B cell (primary cell): ENCODE measurements at regions of chr14 and their contacts with region 1.

Region 1: GRCh38 chr14:91303091-91303923 is 58.8 kb upstream of the GPR68 start:
- DNase-seq: peak; percentile 50
- ATAC-seq: peak; percentile 91
- H3K4me3 ChIP-seq: no peak overlapping the region
- H3K4me3 Mint-ChIP-seq: no peak overlapping the region
- H3K27ac ChIP-seq: peak overlapping the region in 1 of 2 donors; percentile 45
- H3K27ac Mint-ChIP-seq: no peak overlapping the region
- H3K4me1 ChIP-seq: peaks cover 0 to 4% of the 10 kb centered on the region in 2 donors
- H3K4me1 Mint-ChIP-seq: peaks cover 9% of the 10 kb centered on the region
- H3K27me3 ChIP-seq: no peaks in the 10 kb centered on the region
- H3K27me3 Mint-ChIP-seq: no peaks in the 10 kb centered on the region
- CTCF ChIP-seq: no peak

Region 2: DNA sequence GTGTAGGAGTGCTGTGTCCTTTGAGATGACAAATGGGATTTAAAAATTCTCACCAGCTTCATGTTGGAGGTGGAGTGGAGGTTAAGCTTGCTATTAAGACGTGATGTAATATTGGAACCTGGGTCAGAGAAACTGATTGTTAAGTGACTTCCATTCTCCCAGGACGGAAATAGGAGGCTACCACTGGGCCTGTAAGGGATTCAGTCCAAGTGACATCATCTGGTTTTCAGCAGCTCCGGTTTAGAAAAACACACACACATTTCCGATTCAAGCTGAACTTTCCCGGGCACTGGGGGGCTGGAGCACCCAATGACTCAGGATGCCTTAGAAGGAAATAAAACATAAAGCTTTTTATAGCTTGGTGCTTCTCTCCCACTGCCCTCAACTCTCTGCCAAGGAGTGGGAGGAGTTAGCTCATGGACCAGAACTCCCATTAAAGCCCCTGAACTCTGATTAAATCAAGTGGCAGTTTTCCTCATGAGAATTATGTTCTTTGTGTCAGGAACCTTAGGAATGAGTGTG is 894.0 kb before region 1 on chr14:
- CTCF ChIA-PET with region 1: no interaction called
- POLR2A ChIA-PET with region 1: no interaction called
- intact Hi-C with region 1: no loop called
- DNase-seq: no peak
- ATAC-seq: no peak
- H3K4me3 ChIP-seq: no peak overlapping the region
- H3K4me3 Mint-ChIP-seq: no peak overlapping the region
- H3K27ac ChIP-seq: peak overlapping the region in 1 of 2 donors; percentile 52
- H3K27ac Mint-ChIP-seq: no peak overlapping the region
- H3K4me1 ChIP-seq: no peaks in the 10 kb centered on the region
- H3K4me1 Mint-ChIP-seq: no peaks in the 10 kb centered on the region
- H3K27me3 ChIP-seq: no peaks in the 10 kb centered on the region
- H3K27me3 Mint-ChIP-seq: no peaks in the 10 kb centered on the region
- CTCF ChIP-seq: no peak

Region 3: DNA sequence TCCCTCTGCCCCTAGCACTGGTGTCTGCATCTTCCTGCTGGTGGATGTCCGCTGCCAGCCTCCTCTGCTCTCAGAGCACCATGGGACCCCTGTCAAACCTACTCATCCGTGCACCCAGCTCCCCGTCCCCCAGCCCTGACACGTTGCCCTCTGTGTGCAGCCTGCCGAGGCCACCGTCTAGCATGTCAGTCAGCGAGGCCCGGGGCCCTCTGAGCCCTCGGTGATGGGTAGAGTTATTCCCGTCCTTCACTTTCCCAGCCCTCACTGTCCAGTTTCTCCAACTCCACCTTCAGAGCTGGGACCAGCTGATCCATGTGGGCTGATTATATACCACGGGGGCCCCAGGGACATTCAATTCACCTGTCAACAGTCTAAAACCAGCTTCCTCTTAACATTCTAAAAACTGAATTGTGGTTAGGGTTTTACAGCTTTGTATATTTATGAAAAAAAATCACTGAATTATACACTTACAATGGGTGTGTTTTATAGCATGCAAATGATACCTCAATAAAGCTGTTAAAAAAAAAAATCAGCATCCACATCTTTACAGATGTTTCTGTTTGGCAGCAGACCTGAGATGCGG is 53.0 kb after region 1 on chr14:
- CTCF ChIA-PET with region 1: no interaction called
- POLR2A ChIA-PET with region 1: interaction called, 11 read pairs
- intact Hi-C with region 1: no loop called
- DNase-seq: peak; percentile 55
- ATAC-seq: peak; percentile 65
- H3K4me3 ChIP-seq: peak overlapping the region in 4 of 5 experiments; percentile 1 to 47 (median 31)
- H3K4me3 Mint-ChIP-seq: peak overlapping the region; percentile 85
- H3K27ac ChIP-seq: peak overlapping the region in 1 of 2 donors; percentile 55
- H3K27ac Mint-ChIP-seq: peak overlapping the region; percentile 61
- H3K4me1 ChIP-seq: peaks cover 39 to 57% of the 10 kb centered on the region in 2 donors
- H3K4me1 Mint-ChIP-seq: peaks cover 77% of the 10 kb centered on the region
- H3K27me3 ChIP-seq: no peaks in the 10 kb centered on the region
- H3K27me3 Mint-ChIP-seq: no peaks in the 10 kb centered on the region
- CTCF ChIP-seq: no peak